PC-9 (cell line): ENCODE measurements at regions of chrX and their contacts with region 1.

Region 1: DNA sequence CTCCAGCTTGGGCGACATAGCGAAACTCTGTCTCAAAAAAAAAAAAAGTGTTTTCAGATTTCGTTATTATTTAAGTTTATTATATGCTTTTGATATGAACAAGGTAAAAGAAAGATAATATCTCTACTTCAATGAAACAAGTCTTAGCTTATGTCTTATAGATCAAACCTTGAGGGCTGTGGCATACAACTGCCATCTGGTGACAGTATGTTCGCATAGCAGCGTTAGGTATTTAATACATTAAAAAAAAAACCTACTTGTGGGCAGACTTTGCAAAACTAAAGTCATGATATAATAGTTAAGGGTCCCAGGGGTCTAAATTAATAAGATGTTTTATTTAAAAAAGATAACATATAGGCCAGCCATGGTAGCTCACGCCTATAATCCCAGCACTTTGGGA is 161.2 kb upstream of the AMOT start:
- DNase-seq: peak; percentile 35 to 72
- H3K4me3 ChIP-seq: no peak overlapping the region
- H3K27ac ChIP-seq: no peak overlapping the region
- H3K4me1 ChIP-seq: no peaks in the 10 kb centered on the region
- H3K27me3 ChIP-seq: no peaks in the 10 kb centered on the region
- CTCF ChIP-seq: peak; percentile 85

Region 2: DNA sequence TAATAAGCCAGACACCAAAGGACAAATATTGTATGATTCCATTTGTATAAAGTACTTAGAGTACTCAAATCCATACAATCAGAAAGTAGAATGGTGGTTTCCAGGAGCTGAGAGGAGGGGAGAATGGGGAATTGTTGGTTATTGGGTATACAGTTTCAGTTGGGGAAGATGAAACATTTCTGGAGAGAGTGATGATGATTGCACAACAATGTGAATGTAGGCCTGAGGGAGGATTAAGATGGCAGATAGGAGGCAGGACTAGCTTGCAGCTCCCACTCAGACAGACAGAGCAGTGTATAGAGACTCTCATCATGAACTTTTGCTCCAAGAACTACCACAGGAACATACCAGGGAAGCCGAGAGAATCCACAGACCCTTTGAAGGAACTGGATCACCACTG is 1981.6 kb before region 1 on chrX:
- CTCF ChIA-PET with region 1: no interaction called
- POLR2A ChIA-PET with region 1: no interaction called
- intact Hi-C with region 1: no loop called
- DNase-seq: no peak
- H3K4me3 ChIP-seq: no peak overlapping the region
- H3K27ac ChIP-seq: no peak overlapping the region
- H3K4me1 ChIP-seq: no peaks in the 10 kb centered on the region
- H3K27me3 ChIP-seq: no peaks in the 10 kb centered on the region
- CTCF ChIP-seq: no peak

Region 3: DNA sequence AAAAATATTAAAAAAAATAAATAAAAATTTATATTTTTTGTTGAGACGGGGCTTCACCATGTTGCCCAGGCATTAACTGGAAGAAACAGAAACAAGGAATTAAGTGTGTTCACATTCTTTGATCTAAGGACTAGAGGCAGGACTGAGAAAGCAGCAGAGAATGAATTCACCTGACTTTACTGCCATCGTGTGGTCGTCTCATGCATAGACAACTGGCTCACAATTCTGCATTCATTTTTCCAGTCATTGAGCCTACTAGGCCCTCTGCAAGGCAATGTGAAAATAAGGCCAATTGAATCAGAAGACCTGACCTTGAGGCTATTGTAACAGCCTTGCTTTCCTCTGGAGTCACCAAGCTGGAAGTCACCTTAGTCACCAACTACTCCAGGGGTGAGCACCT is 359.5 kb before region 1 on chrX:
- CTCF ChIA-PET with region 1: no interaction called
- POLR2A ChIA-PET with region 1: no interaction called
- intact Hi-C with region 1: loop called (anchors 5 kb)
- DNase-seq: peak; percentile 18 to 37
- H3K4me3 ChIP-seq: no peak overlapping the region
- H3K27ac ChIP-seq: no peak overlapping the region
- H3K4me1 ChIP-seq: no peaks in the 10 kb centered on the region
- H3K27me3 ChIP-seq: no peaks in the 10 kb centered on the region
- CTCF ChIP-seq: peak; percentile 72

Region 4: DNA sequence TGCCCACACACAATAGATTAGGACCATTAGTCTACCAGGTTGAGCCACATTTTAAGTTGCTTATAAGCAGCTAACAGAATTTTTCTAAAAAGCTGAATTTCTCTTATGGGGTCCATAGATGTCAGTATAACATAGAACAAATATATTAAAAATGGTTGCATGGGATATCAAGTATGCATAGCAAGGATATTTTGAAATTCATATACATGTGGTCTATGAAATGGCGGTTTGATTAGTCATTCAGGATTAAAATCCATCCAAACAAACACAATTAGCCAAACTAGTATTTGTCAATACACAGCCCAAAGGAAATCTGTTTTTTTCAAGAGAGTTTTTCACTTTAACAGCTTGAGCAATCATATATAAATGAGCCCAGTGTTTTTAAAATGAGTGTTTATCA is 127.7 kb before region 1 on chrX:
- CTCF ChIA-PET with region 1: no interaction called
- POLR2A ChIA-PET with region 1: no interaction called
- intact Hi-C with region 1: loop called (anchors 2 kb)
- DNase-seq: peak in 1 of 2 experiments; percentile 79
- H3K4me3 ChIP-seq: no peak overlapping the region
- H3K27ac ChIP-seq: no peak overlapping the region
- H3K4me1 ChIP-seq: peaks cover 8% of the 10 kb centered on the region
- H3K27me3 ChIP-seq: no peaks in the 10 kb centered on the region
- CTCF ChIP-seq: peak; percentile 57

Region 5: GRCh38 chrX:112967326-112967725 is 34.5 kb before region 1 on chrX:
- CTCF ChIA-PET with region 1: interaction called, 5 read pairs
- POLR2A ChIA-PET with region 1: interaction called, 5 read pairs
- intact Hi-C with region 1: loop called (anchors 2 kb)
- DNase-seq: peak; percentile 47 to 98
- H3K4me3 ChIP-seq: peak overlapping the region; percentile 38; the same call in 1 of the 2 replicates
- H3K27ac ChIP-seq: peak overlapping the region; percentile 99
- H3K4me1 ChIP-seq: peaks cover 54% of the 10 kb centered on the region
- H3K27me3 ChIP-seq: no peaks in the 10 kb centered on the region
- CTCF ChIP-seq: no peak

Region 6: GRCh38 chrX:112979879-112980278 is 22.0 kb before region 1 on chrX:
- CTCF ChIA-PET with region 1: no interaction called
- POLR2A ChIA-PET with region 1: interaction called, 35 read pairs
- intact Hi-C with region 1: no loop called
- DNase-seq: no peak
- H3K4me3 ChIP-seq: no peak overlapping the region
- H3K27ac ChIP-seq: no peak overlapping the region
- H3K4me1 ChIP-seq: no peaks in the 10 kb centered on the region
- H3K27me3 ChIP-seq: no peaks in the 10 kb centered on the region
- CTCF ChIP-seq: no peak

Region 7: DNA sequence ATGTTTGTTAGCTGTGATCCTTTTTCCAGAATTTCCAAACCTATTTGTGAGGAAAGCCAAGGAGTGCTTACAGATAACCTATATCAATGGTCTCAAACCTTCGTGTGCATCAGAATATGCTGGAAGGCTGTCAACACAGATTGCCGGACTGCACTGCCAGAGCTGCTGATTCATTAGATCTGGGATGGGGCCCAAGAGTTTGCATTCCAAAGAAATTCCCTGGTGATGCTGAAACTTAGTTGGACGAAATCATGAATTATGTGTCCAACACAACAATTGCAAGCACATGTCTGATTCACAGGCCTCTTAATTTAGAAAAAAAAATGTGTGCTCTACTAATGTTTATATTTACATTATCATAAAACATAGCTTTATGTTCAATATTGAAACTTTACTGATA is 382.8 kb after region 1 on chrX:
- CTCF ChIA-PET with region 1: no interaction called
- POLR2A ChIA-PET with region 1: no interaction called
- intact Hi-C with region 1: no loop called
- DNase-seq: no peak
- H3K4me3 ChIP-seq: no peak overlapping the region
- H3K27ac ChIP-seq: no peak overlapping the region
- H3K4me1 ChIP-seq: no peaks in the 10 kb centered on the region
- H3K27me3 ChIP-seq: no peaks in the 10 kb centered on the region
- CTCF ChIP-seq: no peak